Posterior cingulate gyrus (tissue), 11 donors: ENCODE measurements at regions of chr18 and their contacts with region 1.

Region 1: DNA sequence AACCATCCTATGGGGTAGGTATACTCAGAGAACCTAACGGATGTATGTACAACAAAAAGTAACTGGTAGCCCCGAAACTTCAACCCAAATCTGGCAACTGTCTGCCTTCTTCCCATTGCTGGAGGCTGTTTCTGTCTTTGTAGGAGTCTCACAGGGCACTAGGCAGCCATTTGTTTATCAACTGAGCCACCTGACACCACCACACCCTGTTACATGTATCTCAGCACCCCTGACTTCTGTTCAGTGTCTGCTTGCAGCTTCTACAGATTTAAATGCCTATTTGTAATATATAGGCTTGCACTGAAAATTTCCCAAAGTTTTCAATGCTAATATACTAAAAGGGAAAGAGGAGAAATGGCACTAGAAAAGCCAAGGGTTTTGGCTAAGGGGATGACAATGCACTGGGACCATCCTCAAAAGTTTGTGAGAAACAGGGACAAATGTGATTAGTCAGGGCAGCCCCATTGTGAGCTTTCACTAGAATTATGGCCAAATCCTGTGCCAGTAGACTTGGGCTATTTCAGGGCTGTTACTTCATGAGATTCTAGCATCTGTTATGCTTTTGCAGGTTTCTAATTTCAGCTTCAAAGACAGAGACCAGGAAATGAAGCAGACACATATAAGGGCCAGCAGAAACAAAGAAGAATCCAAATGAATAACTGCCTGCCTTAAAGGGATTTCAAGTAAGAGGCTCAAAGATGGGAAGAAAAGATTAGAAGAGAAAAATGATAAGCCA is 103.3 kb downstream of the MYO5B start:
- DNase-seq: no peak

Region 2: GRCh38 chr18:49878567-49879270 is 213.0 kb before region 1 on chr18:
- intact Hi-C with region 1: loop called (anchors 1 kb)
- DNase-seq: no peak